ENCODE measurements at regions of chr19 and their contacts with region 1.

Region 1: DNA sequence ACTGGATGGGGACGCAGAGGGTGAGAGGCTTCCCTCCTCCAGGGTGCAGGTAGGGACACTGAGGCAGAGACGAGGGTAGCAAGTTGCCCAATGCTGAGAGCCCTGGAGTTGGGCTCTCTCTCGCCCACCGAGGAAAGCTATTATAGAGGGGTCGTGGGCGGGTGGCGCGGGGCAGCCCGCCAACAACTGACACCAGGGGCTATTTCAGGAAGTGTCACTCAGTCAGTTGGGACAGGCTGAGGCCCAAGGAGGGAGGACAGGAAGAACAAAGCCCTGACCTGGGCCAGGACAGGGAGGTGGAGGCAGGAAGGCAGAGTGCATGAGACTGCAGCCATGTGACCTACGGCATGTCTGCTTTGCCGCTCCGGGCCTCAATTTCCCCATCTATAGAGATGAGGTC is 29.9 kb downstream of the TINCR start:
- DNase-seq: no peak
- ATAC-seq: no peak
- H3K4me3 ChIP-seq: no peak overlapping the region
- H3K27ac ChIP-seq: no peak overlapping the region
- H3K4me1 ChIP-seq: peaks cover 14% of the 10 kb centered on the region
- H3K27me3 ChIP-seq: no peaks in the 10 kb centered on the region
- CTCF ChIP-seq: no peak

Region 2: GRCh38 chr19:5387472-5387871 is 150.4 kb before region 1 on chr19:
- CTCF ChIA-PET with region 1: interaction called, 10 read pairs
- POLR2A ChIA-PET with region 1: no interaction called
- intact Hi-C with region 1: no loop called
- DNase-seq: no peak
- ATAC-seq: no peak
- H3K4me3 ChIP-seq: no peak overlapping the region
- H3K27ac ChIP-seq: no peak overlapping the region
- H3K4me1 ChIP-seq: no peaks in the 10 kb centered on the region
- H3K27me3 ChIP-seq: peaks cover 15% of the 10 kb centered on the region
- CTCF ChIP-seq: peak; percentile 24